GM23248 (cell line): ENCODE measurements at regions of chr1 and their contacts with region 1.

Region 1: GRCh38 chr1:182962554-182963115 is 9.7 kb upstream of the SHCBP1L start:
- DNase-seq: peak; percentile 97
- H3K4me3 ChIP-seq: peak overlapping the region; percentile 65
- H3K27ac ChIP-seq: peak overlapping the region; percentile 84
- H3K4me1 ChIP-seq: peaks cover 8% of the 10 kb centered on the region; the same call in 1 of the 2 replicates
- H3K27me3 ChIP-seq: no peaks in the 10 kb centered on the region

Region 2: GRCh38 chr1:182588500-182589452 is 373.9 kb before region 1 on chr1 and contains the start of gene RNASEL:
- in situ Hi-C with region 1: no loop called
- DNase-seq: peak; percentile 89
- H3K4me3 ChIP-seq: peak within 1 kb of the TSS; percentile 85
- H3K27ac ChIP-seq: peak within 1 kb of the TSS; percentile 86
- H3K4me1 ChIP-seq: peaks cover 5% of the 10 kb centered on the region; the same call in 1 of the 2 replicates
- H3K27me3 ChIP-seq: no peaks in the 10 kb centered on the region
- total RNA-seq, gene RNASEL: 7.1 and 10.1 TPM in 2 replicates

Region 3: DNA sequence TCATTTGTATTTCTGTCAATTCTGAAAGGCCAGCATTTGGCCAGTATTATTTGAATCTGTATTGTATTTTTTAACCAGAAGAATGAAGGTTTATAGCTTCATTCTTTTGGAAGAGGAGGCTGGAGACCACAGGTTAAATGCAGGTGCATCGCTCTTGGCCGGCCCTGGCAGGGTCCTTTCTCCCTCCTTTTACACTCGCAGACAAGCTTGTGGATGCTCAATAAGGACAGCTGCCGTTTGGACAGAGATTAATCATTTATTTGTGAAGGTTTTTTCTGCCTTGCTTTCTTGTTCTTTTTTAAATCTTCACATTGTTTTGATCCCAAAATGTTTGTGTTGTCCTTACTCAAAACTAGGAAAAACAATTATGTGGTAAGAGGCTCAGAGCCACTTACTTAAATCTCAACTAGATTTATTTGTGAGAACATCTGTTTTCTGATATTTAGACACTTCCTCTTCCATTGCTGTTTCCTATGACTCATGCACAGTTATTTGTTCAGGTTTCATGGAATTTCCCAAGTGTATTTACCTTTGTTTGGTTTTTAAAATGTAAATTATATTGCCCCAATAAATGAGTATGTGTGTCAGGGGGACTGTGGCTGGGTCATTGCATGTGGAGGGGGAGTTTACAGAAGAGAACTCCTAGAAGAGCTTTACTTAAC is 176.8 kb after region 1 on chr1:
- in situ Hi-C with region 1: loop called (anchors 10 kb)
- DNase-seq: peak; percentile 69
- H3K4me3 ChIP-seq: 0 out of 2 replicates have a peak overlapping the region, but pooled peaks have one; percentile 12
- H3K27ac ChIP-seq: peak overlapping the region; percentile 78
- H3K4me1 ChIP-seq: peaks cover 54% of the 10 kb centered on the region
- H3K27me3 ChIP-seq: no peaks in the 10 kb centered on the region